ENCODE measurements at regions of chr2 and their contacts with region 1.

Region 1: GRCh38 chr2:153990771-153991170 is 119.0 kb downstream of the GALNT13 start:
- DNase-seq: no peak
- H3K4me3 ChIP-seq: no peak overlapping the region
- H3K27ac ChIP-seq: no peak overlapping the region
- H3K4me1 ChIP-seq: no peaks in the 10 kb centered on the region
- H3K27me3 ChIP-seq: no peaks in the 10 kb centered on the region
- CTCF ChIP-seq: no peak
- EP300 ChIP-seq: no peak
- POLR2A ChIP-seq: no peak

Region 2: GRCh38 chr2:154092571-154092970 is 101.8 kb after region 1 on chr2:
- intact Hi-C with region 1: loop called in 1 of 4 experiments (anchors 5 kb)
- DNase-seq: no peak
- H3K4me3 ChIP-seq: no peak overlapping the region
- H3K27ac ChIP-seq: no peak overlapping the region
- H3K4me1 ChIP-seq: no peaks in the 10 kb centered on the region
- H3K27me3 ChIP-seq: no peaks in the 10 kb centered on the region
- CTCF ChIP-seq: no peak
- EP300 ChIP-seq: no peak
- POLR2A ChIP-seq: no peak

Region 3: DNA sequence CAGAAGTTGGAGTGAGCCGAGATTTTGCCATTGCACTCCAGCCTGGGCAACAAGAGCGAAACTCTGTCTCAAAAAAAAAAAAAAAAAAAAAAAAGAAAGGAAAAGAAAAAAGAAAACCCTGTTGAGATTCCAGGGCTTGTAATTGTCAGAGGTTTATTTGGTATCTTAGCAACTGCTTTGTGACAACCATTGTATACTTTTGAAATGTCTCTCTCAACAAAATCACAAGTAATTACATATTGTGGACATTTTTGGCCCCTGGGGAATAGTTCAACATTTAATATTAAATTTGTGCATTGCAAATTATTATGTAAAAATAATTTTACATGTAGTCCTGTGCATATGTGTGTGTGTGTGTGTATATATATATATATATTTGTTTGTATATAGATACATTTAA is 151.7 kb after region 1 on chr2:
- intact Hi-C with region 1: no loop called
- DNase-seq: no peak
- H3K4me3 ChIP-seq: no peak overlapping the region
- H3K27ac ChIP-seq: no peak overlapping the region
- H3K4me1 ChIP-seq: no peaks in the 10 kb centered on the region
- H3K27me3 ChIP-seq: no peaks in the 10 kb centered on the region
- CTCF ChIP-seq: no peak
- EP300 ChIP-seq: no peak
- POLR2A ChIP-seq: no peak

Measured in ovary (tissue), 10 donors.